GM13976 (cell line): ENCODE measurements at regions of chr17 and their contacts with region 1.

Region 1: GRCh38 chr17:8753976-8754440 is 4.3 kb downstream of the SPDYE4 start:
- DNase-seq: peak; percentile 69
- CTCF ChIP-seq: peak; percentile 29

Region 2: DNA sequence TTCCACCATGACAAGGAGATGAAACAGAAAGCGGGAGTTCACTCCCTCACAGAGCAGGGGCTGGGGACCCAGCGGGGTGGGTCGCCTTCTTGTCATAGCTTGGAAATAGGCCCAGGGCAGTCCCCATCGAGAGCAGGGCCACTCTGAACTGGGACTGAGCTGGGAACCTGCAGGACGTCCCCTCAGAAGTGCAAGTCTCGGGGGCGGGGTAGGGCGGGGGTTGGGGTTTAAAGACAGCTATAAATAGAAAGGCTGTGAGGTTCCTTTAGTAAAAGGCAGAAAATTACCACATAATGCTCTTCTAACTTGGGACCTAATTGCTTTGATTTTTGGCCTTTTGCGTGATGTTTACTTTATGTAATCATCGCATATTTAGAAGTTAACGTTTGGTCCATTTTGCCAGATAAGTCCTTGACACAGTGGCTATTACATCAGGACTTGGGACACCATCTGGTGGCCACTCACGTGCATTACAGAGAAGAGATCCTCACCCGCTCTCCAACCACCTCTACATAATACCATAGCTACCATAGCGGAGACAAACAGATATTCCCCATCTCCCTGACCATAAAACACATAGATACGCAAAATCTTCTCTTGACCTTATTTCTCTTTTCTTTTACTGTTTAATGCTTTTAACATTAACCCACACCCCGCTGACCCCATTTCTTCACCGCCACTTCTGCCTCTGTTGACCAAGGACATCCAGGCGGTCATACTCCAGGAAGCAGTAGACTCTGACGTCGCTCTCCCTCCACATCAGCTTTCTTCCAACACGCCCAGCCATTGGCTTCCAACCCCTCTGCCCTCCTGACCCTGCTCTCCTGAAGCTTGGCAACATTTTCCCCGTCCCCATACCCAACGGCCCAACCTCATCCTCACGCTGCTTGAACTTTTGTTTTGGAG is 140.9 kb after region 1 on chr17:
- in situ Hi-C with region 1: loop called (anchors 10 kb)
- DNase-seq: peak; percentile 83
- CTCF ChIP-seq: peak; percentile 69